BJ (cell line): ENCODE measurements at regions of chr2 and their contacts with region 1.

Region 1: GRCh38 chr2:178414266-178415247 is 36.4 kb downstream of the PRKRA start:
- DNase-seq: peak; percentile 80
- H3K4me3 ChIP-seq: peak overlapping the region; percentile 62
- H3K27me3 ChIP-seq: no peaks in the 10 kb centered on the region
- CTCF ChIP-seq: peak; percentile 95

Region 2: GRCh38 chr2:178101321-178102079 is 313.1 kb before region 1 on chr2:
- CTCF ChIA-PET with region 1: no interaction called
- POLR2A ChIA-PET with region 1: no interaction called
- DNase-seq: no peak
- H3K4me3 ChIP-seq: no peak overlapping the region
- H3K27me3 ChIP-seq: no peaks in the 10 kb centered on the region
- CTCF ChIP-seq: no peak

Region 3: GRCh38 chr2:178112202-178113152 is 302.1 kb before region 1 on chr2 and contains the start of gene RBM45:
- CTCF ChIA-PET with region 1: interaction called, 18 read pairs
- POLR2A ChIA-PET with region 1: interaction called, 3 read pairs
- DNase-seq: peak; percentile 62
- H3K4me3 ChIP-seq: peak within 1 kb of the TSS; percentile 65
- H3K27me3 ChIP-seq: no peaks in the 10 kb centered on the region
- CTCF ChIP-seq: peak; percentile 99
- polyA plus RNA-seq, gene RBM45: 5.4 and 9.6 TPM in 2 replicates

Region 4: DNA sequence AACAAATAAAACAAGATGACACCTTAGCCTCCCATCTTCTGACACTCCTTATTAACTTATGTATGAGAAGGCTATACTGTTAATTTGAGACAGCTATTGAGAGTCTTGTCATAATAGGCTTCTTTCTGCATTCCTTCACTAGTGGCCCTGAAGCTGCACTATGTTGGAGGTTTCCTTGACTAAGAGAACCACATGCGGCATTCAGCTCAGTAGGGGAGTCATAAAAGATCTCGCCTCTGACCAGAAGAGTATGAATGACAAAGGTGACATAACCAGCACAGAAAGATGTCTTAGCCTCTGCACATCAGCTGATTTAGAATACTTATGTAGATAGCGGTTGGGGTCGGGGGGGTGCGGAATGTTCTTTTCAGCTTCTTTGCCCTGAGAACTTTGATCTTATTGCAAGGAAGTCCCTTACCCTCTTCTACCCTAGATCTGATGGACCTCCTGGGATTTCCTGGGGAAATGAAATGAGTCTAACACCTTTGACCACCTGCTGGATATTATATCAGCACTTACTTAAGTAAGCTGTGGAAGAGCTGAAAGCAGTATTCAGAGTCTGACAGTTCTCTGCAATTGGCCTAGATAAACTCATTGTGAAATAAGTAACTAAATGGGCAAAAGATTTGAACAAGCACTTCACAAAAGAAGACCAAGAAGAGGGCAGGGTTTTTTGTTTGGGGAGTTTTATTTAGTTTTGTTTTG is 278.1 kb before region 1 on chr2:
- CTCF ChIA-PET with region 1: interaction called, 18 read pairs
- POLR2A ChIA-PET with region 1: no interaction called
- DNase-seq: no peak
- H3K4me3 ChIP-seq: no peak overlapping the region
- H3K27me3 ChIP-seq: no peaks in the 10 kb centered on the region
- CTCF ChIP-seq: no peak

Region 5: GRCh38 chr2:178194600-178195389 is 219.8 kb before region 1 on chr2:
- CTCF ChIA-PET with region 1: interaction called, 10 read pairs
- POLR2A ChIA-PET with region 1: no interaction called
- DNase-seq: peak; percentile 4
- H3K4me3 ChIP-seq: peak overlapping the region; percentile 93
- H3K27me3 ChIP-seq: no peaks in the 10 kb centered on the region
- CTCF ChIP-seq: no peak

Region 6: DNA sequence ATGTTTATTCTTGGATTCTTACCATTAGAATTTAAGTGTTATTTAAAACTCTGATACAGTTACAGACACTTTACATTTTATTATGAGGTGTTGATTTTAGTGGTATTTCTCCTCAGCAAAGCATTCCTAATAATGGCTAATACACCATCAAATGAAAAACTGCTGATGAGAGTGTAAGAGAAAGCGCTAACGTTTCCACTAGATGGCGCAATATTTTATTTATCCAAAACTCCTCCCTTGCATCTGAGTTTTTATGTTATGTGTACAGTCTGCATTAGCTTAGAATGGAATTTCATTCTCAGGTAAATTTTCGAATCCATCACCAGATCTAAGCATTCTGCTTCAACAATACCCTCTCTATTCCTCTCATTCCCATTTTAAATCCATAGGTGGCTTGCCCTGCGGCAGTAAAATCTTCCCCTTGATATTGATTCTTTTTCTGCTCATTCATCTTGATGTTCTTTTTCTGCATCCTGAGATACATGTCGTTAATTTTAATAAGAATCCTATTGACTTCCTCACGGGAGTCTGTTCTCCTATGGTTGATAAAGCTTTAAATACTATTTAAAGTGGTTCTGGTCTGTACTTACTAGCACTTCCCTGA is 17.5 kb before region 1 on chr2:
- CTCF ChIA-PET with region 1: interaction called, 175 read pairs
- POLR2A ChIA-PET with region 1: no interaction called
- DNase-seq: no peak
- H3K4me3 ChIP-seq: no peak overlapping the region
- H3K27me3 ChIP-seq: no peaks in the 10 kb centered on the region
- CTCF ChIP-seq: peak; percentile 68

Region 7: GRCh38 chr2:178589337-178589736 is 174.8 kb after region 1 on chr2:
- CTCF ChIA-PET with region 1: no interaction called
- POLR2A ChIA-PET with region 1: no interaction called
- DNase-seq: no peak
- H3K4me3 ChIP-seq: no peak overlapping the region
- H3K27me3 ChIP-seq: no peaks in the 10 kb centered on the region
- CTCF ChIP-seq: no peak